ENCODE measurements at regions of chr6 and their contacts with region 1.

Region 1: GRCh38 chr6:15351631-15352030 is 105.8 kb downstream of the JARID2 start:
- DNase-seq: no peak
- H3K4me3 ChIP-seq: no peak overlapping the region
- H3K27ac ChIP-seq: no peak overlapping the region
- H3K4me1 ChIP-seq: peaks cover 21 to 32% (median 23%) of the 10 kb centered on the region in 4 donors
- H3K27me3 ChIP-seq: no peaks in the 10 kb centered on the region
- CTCF ChIP-seq: no peak
- EP300 ChIP-seq: no peak
- POLR2A ChIP-seq: no peak

Region 2: DNA sequence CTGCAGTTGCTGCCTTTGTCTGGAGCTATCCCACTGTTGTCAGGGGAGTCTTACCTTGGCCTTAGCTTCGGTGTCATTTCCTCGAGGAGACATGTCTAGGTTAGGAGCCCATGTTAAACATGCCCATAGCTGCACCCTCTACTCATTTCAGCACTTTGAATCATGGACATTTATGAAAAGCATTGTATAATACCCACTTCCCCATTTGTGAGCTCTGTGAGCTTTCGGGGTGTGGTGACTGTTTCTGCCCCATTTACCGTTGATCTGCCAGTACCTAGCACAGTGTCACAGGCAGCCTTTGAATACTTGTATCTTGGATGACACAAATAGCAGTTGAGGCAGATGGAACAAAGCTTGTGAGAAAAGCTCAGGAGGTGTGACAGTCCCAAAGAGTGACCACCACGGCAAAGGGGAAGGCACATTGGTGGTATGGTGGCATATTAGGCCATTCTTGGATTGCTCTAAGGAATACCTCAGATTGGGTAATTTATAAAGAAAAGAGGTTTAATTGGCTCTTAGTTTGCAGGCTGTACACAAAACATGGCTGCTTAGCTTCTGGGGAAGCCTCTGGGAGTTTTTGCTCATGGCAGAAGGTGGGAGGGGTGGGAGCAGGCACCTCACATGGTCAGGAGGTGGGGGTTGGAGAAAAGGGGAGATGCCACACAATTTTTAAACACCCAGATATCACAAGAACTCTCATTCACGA is 63.8 kb before region 1 on chr6:
- intact Hi-C with region 1: loop called (anchors 10 kb)
- DNase-seq: no peak
- H3K4me3 ChIP-seq: no peak overlapping the region
- H3K27ac ChIP-seq: no peak overlapping the region
- H3K4me1 ChIP-seq: peaks cover 22 to 36% (median 30%) of the 10 kb centered on the region in 4 donors
- H3K27me3 ChIP-seq: no peaks in the 10 kb centered on the region
- CTCF ChIP-seq: no peak
- EP300 ChIP-seq: no peak
- POLR2A ChIP-seq: no peak

Region 3: GRCh38 chr6:15444881-15445280 is 93.2 kb after region 1 on chr6:
- intact Hi-C with region 1: no loop called
- DNase-seq: no peak
- H3K4me3 ChIP-seq: no peak overlapping the region
- H3K27ac ChIP-seq: no peak overlapping the region
- H3K4me1 ChIP-seq: peaks cover 53 to 67% (median 64%) of the 10 kb centered on the region in 4 donors
- H3K27me3 ChIP-seq: no peaks in the 10 kb centered on the region
- CTCF ChIP-seq: no peak
- EP300 ChIP-seq: no peak
- POLR2A ChIP-seq: no peak